HAP-1 (cell line): ENCODE measurements at regions of chr20 and their contacts with region 1.

Region 1: DNA sequence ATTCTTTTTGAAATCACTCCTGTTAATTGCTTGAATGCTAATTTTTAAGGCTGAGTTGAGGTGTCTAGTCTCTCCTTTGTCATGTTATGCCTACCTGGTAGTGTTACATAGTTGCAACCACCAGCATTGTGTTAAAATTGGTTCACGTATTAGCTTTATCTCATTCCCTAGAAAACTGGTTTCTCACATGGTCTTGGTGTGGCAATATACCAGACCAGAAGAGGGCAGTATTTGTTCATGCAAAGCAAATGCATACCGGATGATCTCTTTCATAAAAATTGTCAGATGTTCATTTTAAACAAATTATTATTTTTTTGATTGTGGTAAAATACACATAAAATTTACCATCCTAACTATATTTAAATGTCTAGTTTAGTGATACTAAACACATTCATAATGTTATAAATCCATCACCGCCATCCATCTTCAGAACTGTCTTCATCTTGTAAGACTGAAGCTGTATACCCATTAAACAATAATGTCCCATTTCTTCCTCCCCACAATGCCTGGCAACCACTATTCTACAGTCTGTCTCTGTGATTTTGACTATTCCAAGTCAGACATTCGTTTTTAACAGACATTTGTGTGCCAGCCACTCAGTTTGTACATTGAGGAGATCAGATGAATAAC is 92.8 kb downstream of the ATRN start:
- DNase-seq: peak; percentile 47 to 59
- H3K4me3 ChIP-seq: no peak overlapping the region
- H3K4me1 ChIP-seq: peaks cover 17% of the 10 kb centered on the region
- H3K27me3 ChIP-seq: no peaks in the 10 kb centered on the region

Region 2: GRCh38 chr20:3312940-3313682 is 250.6 kb before region 1 on chr20:
- in situ Hi-C with region 1: no loop called
- DNase-seq: peak in 1 of 2 experiments; percentile 12
- H3K4me3 ChIP-seq: no peak overlapping the region
- H3K4me1 ChIP-seq: peaks cover 6% of the 10 kb centered on the region
- H3K27me3 ChIP-seq: no peaks in the 10 kb centered on the region

Region 3: GRCh38 chr20:3658716-3659491 is 95.2 kb after region 1 on chr20:
- in situ Hi-C with region 1: no loop called
- DNase-seq: peak in 1 of 2 experiments; percentile 3
- H3K4me3 ChIP-seq: no peak overlapping the region
- H3K4me1 ChIP-seq: no peaks in the 10 kb centered on the region
- H3K27me3 ChIP-seq: peaks cover 9% of the 10 kb centered on the region; the same call in 1 of the 2 replicates

Region 4: DNA sequence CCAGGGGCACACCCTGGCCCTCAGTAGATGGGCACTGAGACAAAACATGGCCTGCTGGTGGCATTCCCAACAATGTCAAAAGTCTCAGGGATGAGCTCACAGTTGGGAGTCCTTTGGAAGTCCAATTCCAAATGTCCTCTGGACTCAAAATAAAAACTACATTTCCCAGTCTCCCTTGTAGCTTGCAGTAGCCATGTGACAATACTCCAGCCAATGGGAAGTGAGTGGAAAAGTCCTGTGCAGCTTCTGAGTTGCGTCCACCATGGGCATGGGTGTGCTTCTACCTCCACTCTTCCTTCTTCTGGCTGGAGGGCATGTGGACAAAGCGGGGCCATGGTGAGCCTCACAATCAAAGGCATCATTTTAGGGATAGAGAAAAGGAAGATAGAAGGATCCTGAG is 124.0 kb after region 1 on chr20:
- in situ Hi-C with region 1: no loop called
- DNase-seq: peak; percentile 32 to 51
- H3K4me3 ChIP-seq: no peak overlapping the region
- H3K4me1 ChIP-seq: peaks cover 13% of the 10 kb centered on the region
- H3K27me3 ChIP-seq: no peaks in the 10 kb centered on the region

Region 5: DNA sequence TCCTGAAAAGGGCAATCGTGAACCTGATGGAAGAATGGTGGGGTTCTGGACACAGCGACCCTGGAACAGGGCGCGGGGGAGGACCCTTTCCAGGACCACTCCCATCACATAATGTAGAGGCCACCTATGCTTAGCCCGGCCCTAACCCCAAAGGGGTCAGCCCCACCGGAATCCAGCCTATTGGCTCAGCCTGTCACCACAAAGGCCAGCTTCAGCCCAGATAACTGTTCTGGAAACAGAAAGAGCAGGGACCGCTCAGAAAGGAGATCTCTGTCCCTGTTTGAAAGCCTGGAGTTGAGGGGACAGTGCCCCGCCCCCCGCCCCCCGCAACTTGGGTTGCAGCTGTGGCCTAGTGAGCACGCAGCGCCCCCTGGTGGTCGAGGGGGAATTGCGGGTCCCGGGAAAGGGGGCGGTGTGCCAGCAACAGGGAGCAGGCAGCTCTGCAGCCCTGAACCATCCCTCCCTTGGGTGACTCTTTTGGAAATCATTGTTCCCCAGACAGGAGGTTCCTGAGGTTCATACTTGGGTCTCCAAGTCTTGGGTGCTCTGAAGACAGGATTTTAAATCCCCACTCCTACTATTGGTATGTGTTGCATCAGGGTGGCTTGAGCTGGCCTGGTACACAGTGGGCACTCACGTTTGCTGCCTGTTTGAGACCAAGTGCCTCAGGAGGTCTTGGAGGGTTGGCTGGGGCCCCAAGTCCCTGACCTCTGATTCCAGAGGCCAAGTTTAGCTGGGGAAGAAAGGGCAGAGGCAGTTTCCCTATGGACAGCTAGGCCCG is 147.2 kb after region 1 on chr20:
- in situ Hi-C with region 1: loop called (anchors 10 kb)
- DNase-seq: peak in 1 of 2 experiments; percentile 86
- H3K4me3 ChIP-seq: no peak overlapping the region
- H3K4me1 ChIP-seq: no peaks in the 10 kb centered on the region
- H3K27me3 ChIP-seq: no peaks in the 10 kb centered on the region

Region 6: GRCh38 chr20:3854462-3854871 is 290.8 kb after region 1 on chr20:
- in situ Hi-C with region 1: loop called (anchors 10 kb)
- DNase-seq: no peak
- H3K4me3 ChIP-seq: no peak overlapping the region
- H3K4me1 ChIP-seq: no peaks in the 10 kb centered on the region
- H3K27me3 ChIP-seq: no peaks in the 10 kb centered on the region